Mammary epithelial cell (primary cell): ENCODE measurements at regions of chr11 and their contacts with region 1.

Region 1: DNA sequence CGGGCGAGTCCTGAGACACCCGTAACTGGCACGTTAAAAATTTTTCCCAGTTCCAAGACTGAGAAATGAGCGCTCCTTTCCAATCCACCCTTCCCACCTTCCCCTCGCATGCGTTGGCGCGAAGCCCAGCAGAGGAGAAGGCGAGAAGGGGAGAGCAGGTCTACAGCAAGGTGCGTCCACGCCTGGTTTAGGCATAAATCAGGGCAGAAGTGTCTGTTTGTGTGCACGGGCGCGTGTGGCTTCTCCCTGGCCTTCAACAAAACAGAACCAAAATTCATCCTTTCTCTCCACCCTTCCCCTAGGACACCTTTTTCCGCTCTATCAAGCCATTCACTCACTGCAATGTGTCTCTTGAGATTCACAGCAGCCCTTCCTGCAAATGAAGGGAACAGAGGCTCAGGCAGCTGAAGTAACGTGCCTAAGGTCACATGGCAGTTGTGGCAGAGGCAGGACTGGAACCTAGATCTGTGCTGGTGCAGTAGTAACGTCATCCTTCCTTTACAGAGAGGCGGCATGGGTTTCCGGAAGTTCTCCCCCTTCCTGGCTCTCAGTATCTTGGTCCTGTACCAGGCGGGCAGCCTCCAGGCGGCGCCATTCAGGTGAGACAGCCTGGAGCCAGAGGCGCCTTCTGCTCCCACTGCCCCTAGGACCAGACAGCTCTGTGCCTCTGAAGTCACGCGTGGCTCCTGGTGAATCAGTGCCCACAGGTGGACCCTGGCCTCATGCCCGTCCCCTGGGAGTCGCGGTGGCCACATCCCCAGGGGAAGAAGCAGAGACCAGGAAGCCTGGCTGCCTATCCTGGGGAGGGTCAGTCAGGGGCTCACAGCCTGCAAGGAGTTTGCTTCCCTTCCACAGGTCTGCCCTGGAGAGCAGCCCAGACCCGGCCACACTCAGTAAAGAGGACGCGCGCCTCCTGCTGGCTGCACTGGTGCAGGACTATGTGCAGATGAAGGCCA is 1.1 kb downstream of the CALCB start:
- DNase-seq: peak; percentile 68
- H3K4me3 ChIP-seq: peak overlapping the region in 2 of 3 experiments; percentile 6 to 26
- H3K27ac ChIP-seq: no peak overlapping the region
- H3K4me1 ChIP-seq: peaks cover 16% of the 10 kb centered on the region
- H3K27me3 ChIP-seq: peaks cover 6% of the 10 kb centered on the region
- CTCF ChIP-seq: peak; percentile 76 to 85

Region 2: GRCh38 chr11:14789879-14790484 is 284.5 kb before region 1 on chr11:
- CTCF ChIA-PET with region 1: no interaction called
- dilution Hi-C with region 1: no loop called
- in situ Hi-C with region 1: no loop called
- intact Hi-C with region 1: loop called (anchors 1 kb)
- DNase-seq: no peak
- H3K4me3 ChIP-seq: no peak overlapping the region
- H3K27ac ChIP-seq: no peak overlapping the region
- H3K4me1 ChIP-seq: no peaks in the 10 kb centered on the region
- H3K27me3 ChIP-seq: peaks cover 4% of the 10 kb centered on the region
- CTCF ChIP-seq: peak; percentile 35 to 63

Region 3: GRCh38 chr11:14974515-14975251 is 99.8 kb before region 1 on chr11:
- CTCF ChIA-PET with region 1: interaction called, 3 read pairs
- dilution Hi-C with region 1: no loop called
- in situ Hi-C with region 1: loop called in 1 of 2 experiments (anchors 10 kb)
- intact Hi-C with region 1: loop called (anchors 2 kb)
- DNase-seq: peak; percentile 33
- H3K4me3 ChIP-seq: peak overlapping the region in 2 of 3 experiments; percentile 2 to 5
- H3K27ac ChIP-seq: no peak overlapping the region
- H3K4me1 ChIP-seq: peaks cover 18% of the 10 kb centered on the region
- H3K27me3 ChIP-seq: peaks cover 48% of the 10 kb centered on the region
- CTCF ChIP-seq: peak; percentile 84 to 90

Region 4: DNA sequence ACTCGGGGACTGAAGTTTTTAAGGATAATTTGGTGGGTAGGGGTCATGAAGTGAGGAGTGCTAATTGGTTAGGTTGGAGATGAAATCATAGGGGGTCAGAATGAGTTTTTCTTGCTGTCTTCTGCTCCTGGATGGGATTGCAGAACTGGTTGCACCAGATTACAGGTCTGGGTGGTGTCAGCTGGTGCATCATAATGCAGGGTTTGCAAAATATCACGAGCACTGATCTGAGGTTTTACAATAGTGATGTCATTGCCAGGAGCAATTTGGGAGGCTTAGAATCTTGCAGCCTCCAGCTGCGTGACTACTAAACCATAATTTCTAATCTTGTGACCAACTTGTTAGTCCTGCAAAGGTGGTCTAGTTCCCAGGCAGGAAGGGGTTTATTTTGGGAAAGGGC is 47.5 kb before region 1 on chr11:
- CTCF ChIA-PET with region 1: no interaction called
- dilution Hi-C with region 1: no loop called
- in situ Hi-C with region 1: no loop called
- intact Hi-C with region 1: no loop called
- DNase-seq: peak; percentile 20
- H3K4me3 ChIP-seq: no peak overlapping the region
- H3K27ac ChIP-seq: no peak overlapping the region
- H3K4me1 ChIP-seq: no peaks in the 10 kb centered on the region
- H3K27me3 ChIP-seq: no peaks in the 10 kb centered on the region
- CTCF ChIP-seq: no peak

Region 5: DNA sequence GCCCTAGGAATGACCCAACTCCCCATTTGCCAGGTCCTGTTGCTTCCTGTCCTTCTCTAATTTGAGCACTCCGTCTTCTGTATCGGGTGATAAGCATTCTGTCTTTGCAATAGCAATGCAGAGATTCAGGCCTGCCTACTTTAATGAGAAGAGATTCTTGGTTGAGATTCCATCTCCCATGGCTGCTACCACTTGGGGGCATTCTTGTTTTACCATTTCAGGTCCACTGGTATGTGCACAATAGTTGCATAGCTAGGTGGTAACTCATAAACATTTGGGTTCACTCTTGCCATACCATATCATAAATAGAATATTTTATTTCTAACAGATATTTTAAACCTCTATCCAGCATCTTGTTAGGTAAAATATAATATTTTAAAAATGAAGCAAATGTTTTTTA is 35.5 kb before region 1 on chr11:
- CTCF ChIA-PET with region 1: interaction called, 22 read pairs
- dilution Hi-C with region 1: no loop called
- in situ Hi-C with region 1: no loop called
- intact Hi-C with region 1: loop called (anchors 1 kb)
- DNase-seq: peak; percentile 24
- H3K4me3 ChIP-seq: no peak overlapping the region
- H3K27ac ChIP-seq: no peak overlapping the region
- H3K4me1 ChIP-seq: no peaks in the 10 kb centered on the region
- H3K27me3 ChIP-seq: no peaks in the 10 kb centered on the region
- CTCF ChIP-seq: peak; percentile 38 to 63

Region 6: GRCh38 chr11:15159085-15159484 is 84.6 kb after region 1 on chr11:
- CTCF ChIA-PET with region 1: no interaction called
- dilution Hi-C with region 1: no loop called
- in situ Hi-C with region 1: no loop called
- intact Hi-C with region 1: loop called (anchors 1 kb)
- DNase-seq: peak; percentile 39
- H3K4me3 ChIP-seq: no peak overlapping the region
- H3K27ac ChIP-seq: no peak overlapping the region
- H3K4me1 ChIP-seq: peaks cover 19% of the 10 kb centered on the region
- H3K27me3 ChIP-seq: no peaks in the 10 kb centered on the region
- CTCF ChIP-seq: peak; percentile 76 to 81

Region 7: GRCh38 chr11:15347969-15348734 is 273.7 kb after region 1 on chr11:
- CTCF ChIA-PET with region 1: no interaction called
- dilution Hi-C with region 1: no loop called
- in situ Hi-C with region 1: no loop called
- intact Hi-C with region 1: no loop called
- DNase-seq: no peak
- H3K4me3 ChIP-seq: no peak overlapping the region
- H3K27ac ChIP-seq: no peak overlapping the region
- H3K4me1 ChIP-seq: no peaks in the 10 kb centered on the region
- H3K27me3 ChIP-seq: no peaks in the 10 kb centered on the region
- CTCF ChIP-seq: no peak

Region 8: GRCh38 chr11:16613512-16614381 is 1539.3 kb after region 1 on chr11:
- CTCF ChIA-PET with region 1: no interaction called
- dilution Hi-C with region 1: no loop called
- in situ Hi-C with region 1: no loop called
- intact Hi-C with region 1: loop called (anchors 10 kb)
- DNase-seq: peak; percentile 72
- H3K4me3 ChIP-seq: peak overlapping the region; percentile 42 to 51 (median 49)
- H3K27ac ChIP-seq: no peak overlapping the region
- H3K4me1 ChIP-seq: peaks cover 12% of the 10 kb centered on the region
- H3K27me3 ChIP-seq: peaks cover 44% of the 10 kb centered on the region
- CTCF ChIP-seq: peak; percentile 88 to 90